ENCODE measurements at regions of chr6 and their contacts with region 1.

Region 1: GRCh38 chr6:118580585-118581419 is 32.7 kb downstream of the PLN start:
- DNase-seq: peak; percentile 44
- H3K4me3 ChIP-seq: no peak overlapping the region
- H3K27ac ChIP-seq: no peak overlapping the region
- H3K4me1 ChIP-seq: no peaks in the 10 kb centered on the region
- H3K27me3 ChIP-seq: no peaks in the 10 kb centered on the region
- CTCF ChIP-seq: peak; percentile 58

Region 2: DNA sequence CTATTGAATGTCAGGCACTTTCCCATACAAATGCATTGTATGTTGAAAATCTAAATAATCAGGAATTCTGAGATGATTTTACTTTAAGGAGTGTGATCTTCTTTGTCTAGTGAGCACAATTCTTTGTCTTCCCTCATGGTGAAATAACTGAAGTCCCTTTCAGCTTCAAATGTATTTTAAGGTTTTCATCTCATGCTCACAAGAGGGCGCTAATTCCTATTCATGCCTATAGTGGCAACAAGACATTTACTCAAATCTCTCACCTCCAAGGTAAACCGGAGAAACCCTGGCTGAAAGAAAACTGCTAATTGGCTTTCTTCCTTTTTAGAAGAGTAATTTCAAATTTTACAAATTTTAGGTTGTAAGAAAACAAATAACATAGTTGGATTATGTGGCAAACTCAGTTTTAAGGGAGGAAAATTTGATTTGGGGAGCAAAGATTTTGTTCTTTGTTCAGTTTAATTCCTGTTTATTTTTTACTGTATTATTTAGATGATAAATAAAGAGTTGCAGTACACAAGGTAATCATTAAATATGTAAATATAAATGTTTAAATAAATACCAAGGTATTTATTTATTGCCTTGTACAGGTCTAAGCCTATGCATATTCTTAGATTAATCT is 604.7 kb before region 1 on chr6:
- intact Hi-C with region 1: loop called (anchors 10 kb)
- DNase-seq: peak; percentile 20
- H3K4me3 ChIP-seq: no peak overlapping the region
- H3K27ac ChIP-seq: no peak overlapping the region
- H3K4me1 ChIP-seq: no peaks in the 10 kb centered on the region
- H3K27me3 ChIP-seq: no peaks in the 10 kb centered on the region
- CTCF ChIP-seq: peak; percentile 40

Region 3: DNA sequence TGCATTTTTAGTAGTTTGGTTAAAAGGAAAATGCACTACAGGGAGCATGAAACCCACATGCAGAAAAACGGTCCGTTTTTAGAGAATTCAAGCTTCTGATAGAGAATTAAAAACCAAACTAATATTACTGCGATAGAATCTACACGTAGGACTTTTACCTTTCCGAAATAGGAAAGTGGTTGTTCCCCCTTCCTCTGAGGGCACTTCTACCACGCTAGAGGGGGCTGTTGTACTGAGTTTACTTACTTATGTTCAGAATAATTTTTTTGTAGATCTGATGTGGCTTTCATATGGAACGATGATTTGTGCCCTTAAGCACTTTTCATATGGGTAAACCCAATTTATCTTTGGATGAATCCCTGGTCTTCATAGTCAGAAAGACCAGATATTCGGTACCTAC is 297.0 kb before region 1 on chr6:
- intact Hi-C with region 1: loop called (anchors 10 kb)
- DNase-seq: peak; percentile 23
- H3K4me3 ChIP-seq: no peak overlapping the region
- H3K27ac ChIP-seq: no peak overlapping the region
- H3K4me1 ChIP-seq: no peaks in the 10 kb centered on the region
- H3K27me3 ChIP-seq: no peaks in the 10 kb centered on the region
- CTCF ChIP-seq: peak; percentile 28